A549 (cell line): ENCODE measurements at regions of chr10 and their contacts with region 1.

Region 1: DNA sequence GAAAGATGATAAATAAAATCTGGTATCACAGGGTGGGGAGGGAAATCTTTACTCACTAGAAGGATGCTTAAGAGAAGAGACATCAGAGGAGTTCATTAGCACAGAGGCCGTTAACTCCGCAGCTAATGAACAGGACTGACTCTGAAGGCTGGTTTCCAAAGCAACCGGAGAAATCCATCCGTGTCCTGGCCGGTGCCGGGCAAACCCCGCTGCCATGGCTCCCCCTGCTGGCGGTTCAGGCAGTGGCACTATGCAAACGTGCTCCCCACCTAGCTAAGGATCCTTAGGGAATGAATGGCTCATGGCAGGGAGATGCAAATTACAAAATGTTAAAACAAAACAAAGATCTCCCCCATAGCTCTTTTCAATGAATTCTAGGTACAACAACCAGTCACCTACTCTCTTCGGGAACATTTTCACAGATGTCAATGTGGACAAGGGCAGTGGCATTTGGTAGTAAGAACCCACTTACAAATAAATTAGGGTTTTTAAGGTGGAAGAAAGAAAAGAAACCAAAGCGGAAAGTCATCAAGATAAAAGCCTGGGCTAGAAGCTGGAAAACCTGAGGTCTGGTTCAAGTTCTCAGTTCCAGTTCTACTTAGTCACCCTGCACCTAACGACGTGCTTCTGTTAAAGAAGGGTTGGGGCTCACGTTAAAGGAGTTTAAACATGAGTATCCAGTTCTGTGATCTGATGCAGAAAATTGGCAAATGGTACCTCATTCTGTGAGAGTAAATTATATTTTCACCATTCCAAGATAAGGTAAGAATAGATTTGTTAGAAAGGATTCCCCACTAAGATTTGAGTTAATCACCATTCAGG is 138.2 kb downstream of the SVIL start:
- DNase-seq: peak; percentile 65 to 73
- ATAC-seq: peak; percentile 97 to 99
- H3K4me3 ChIP-seq: no peak overlapping the region
- H3K27ac ChIP-seq: no peak overlapping the region
- H3K4me1 ChIP-seq: peaks cover 2% of the 10 kb centered on the region; the same call in 2 of the 3 replicates
- CTCF ChIP-seq: peak; percentile 87
- EP300 ChIP-seq: no peak
- POLR2A ChIP-seq: no peak
- RAD21 ChIP-seq: peak; percentile 72 to 75

Region 2: GRCh38 chr10:29482591-29483431 is 13.7 kb before region 1 on chr10:
- CTCF ChIA-PET with region 1: interaction called, 22 read pairs
- POLR2A ChIA-PET with region 1: no interaction called
- DNase-seq: no peak
- ATAC-seq: peak; percentile 38 to 41; a peak in 3 of 6 replicates
- H3K4me3 ChIP-seq: no peak overlapping the region
- H3K27ac ChIP-seq: no peak overlapping the region
- H3K4me1 ChIP-seq: no peaks in the 10 kb centered on the region
- CTCF ChIP-seq: no peak
- EP300 ChIP-seq: no peak
- POLR2A ChIP-seq: no peak
- RAD21 ChIP-seq: 0 out of 5 replicates have a peak, but pooled peaks of 1 of the 2 experiments have one; percentile 8

Region 3: GRCh38 chr10:29522061-29522855 is 25.7 kb after region 1 on chr10:
- CTCF ChIA-PET with region 1: interaction called, 13 read pairs
- POLR2A ChIA-PET with region 1: no interaction called
- DNase-seq: no peak
- ATAC-seq: no peak
- H3K4me3 ChIP-seq: no peak overlapping the region
- H3K27ac ChIP-seq: no peak overlapping the region
- H3K4me1 ChIP-seq: no peaks in the 10 kb centered on the region
- CTCF ChIP-seq: no peak
- EP300 ChIP-seq: no peak
- POLR2A ChIP-seq: no peak
- RAD21 ChIP-seq: no peak

Region 4: DNA sequence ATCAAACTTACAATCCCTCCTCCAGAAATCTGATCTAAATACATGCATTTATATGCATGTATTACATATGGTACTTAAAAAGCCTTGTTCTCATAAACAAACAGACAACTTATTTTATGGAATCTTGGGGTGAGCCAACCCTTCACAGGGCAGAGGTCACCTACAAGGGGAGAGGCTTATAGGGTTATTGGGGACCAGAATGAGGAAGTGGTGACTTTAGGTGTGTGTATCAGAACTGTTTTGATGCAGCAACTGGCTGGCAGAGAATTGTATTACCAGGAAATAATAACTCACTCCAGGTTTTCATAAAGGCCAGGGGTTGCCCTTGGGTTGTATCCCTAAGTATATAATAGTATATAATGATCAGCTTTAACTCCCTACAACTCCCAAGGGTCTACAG is 47.2 kb after region 1 on chr10:
- CTCF ChIA-PET with region 1: no interaction called
- POLR2A ChIA-PET with region 1: no interaction called
- DNase-seq: no peak
- ATAC-seq: no peak
- H3K4me3 ChIP-seq: no peak overlapping the region
- H3K27ac ChIP-seq: no peak overlapping the region
- H3K4me1 ChIP-seq: no peaks in the 10 kb centered on the region
- CTCF ChIP-seq: no peak
- EP300 ChIP-seq: no peak
- POLR2A ChIP-seq: no peak
- RAD21 ChIP-seq: no peak